Lower leg skin (tissue), 4 donors: ENCODE measurements at regions of chr4 and their contacts with region 1.

Region 1: DNA sequence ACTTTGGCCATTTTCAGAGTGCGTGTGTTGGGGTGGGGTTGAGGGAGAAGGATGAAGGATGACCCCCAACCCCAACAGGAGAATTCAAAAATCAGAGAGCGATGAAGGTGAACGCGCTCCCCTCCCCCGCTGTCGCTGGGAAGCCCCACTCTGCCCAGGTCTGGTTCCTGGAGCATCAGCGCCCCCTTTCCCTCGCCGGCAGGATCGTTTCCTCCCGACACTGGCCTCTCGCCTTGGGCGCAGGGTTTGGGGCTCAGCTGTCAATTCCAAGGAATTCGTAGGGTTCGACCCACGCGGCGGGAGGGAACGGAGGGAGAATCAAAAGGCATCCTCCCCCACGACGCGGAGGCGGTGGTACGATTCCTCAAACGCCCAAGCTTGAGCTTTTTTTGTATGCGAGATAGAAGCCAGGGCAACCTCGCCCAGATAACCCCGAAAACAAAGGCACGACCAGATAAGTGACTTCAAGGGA is 1.0 kb upstream of the PDGFRA start:
- DNase-seq: peak; percentile 59 to 95
- H3K4me3 ChIP-seq: no peak overlapping the region
- CTCF ChIP-seq: no peak
- POLR2A ChIP-seq: no peak

Region 2: DNA sequence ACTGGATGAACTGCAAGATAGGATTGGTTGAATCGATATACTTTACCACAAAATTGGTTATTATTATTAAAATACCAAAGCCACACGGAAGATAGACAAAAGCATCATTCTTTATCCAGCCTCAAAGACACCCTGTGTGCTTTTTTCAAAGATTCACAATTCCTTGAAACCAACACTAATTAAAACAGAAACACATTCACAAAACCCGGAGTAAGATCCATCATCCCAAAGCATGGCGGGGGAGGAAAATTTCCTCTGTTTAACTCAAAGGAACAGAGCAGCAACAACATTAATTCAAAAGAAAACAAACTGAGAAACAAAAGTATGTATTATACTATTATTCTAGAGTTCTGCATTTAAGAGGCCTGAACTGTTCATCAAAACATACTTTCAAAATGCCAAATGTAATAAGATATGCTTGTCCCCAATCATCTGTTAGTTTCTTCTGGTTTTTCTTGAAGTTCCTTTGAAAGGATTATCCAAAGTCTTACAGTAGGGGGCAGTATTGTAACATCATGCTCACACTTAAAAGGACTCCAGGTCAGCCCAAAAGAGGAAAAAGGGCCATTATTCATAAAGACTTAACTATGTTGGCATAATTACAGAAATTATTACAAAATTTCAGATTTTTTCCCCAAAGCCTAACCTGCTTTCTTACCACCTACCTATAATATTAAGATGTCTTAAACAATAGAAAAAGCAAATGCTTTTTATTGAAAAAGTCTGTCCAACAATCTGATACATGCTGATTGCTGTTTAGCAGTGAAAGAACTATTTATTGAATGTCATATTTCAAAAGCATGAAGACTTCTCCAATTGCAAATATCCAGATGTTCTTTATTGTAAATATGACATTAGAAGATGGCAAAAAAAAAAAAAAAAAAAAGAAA is 1031.0 kb before region 1 on chr4:
- intact Hi-C with region 1: loop called (anchors 10 kb)
- DNase-seq: no peak
- H3K4me3 ChIP-seq: no peak overlapping the region
- CTCF ChIP-seq: peak in 1 of 3 donors; percentile 23
- POLR2A ChIP-seq: no peak

Region 3: GRCh38 chr4:53908661-53909078 is 319.4 kb before region 1 on chr4:
- intact Hi-C with region 1: loop called (anchors 10 kb)
- DNase-seq: peak in 1 of 2 donors; percentile 38
- H3K4me3 ChIP-seq: no peak overlapping the region
- CTCF ChIP-seq: no peak
- POLR2A ChIP-seq: no peak

Region 4: GRCh38 chr4:53929955-53930798 is 297.9 kb before region 1 on chr4:
- intact Hi-C with region 1: loop called (anchors 2 kb)
- DNase-seq: peak; percentile 81 to 91
- H3K4me3 ChIP-seq: no peak overlapping the region
- CTCF ChIP-seq: no peak
- POLR2A ChIP-seq: no peak